ENCODE measurements at regions of chr6 and their contacts with region 1.

Region 1: GRCh38 chr6:16770701-16771569 is 9.7 kb upstream of the ATXN1 start:
- DNase-seq: peak; percentile 79
- H3K4me3 Mint-ChIP-seq: no peak overlapping the region
- H3K27ac Mint-ChIP-seq: no peak overlapping the region
- H3K4me1 Mint-ChIP-seq: peaks cover 57% of the 10 kb centered on the region
- H3K27me3 Mint-ChIP-seq: no peaks in the 10 kb centered on the region

Region 2: DNA sequence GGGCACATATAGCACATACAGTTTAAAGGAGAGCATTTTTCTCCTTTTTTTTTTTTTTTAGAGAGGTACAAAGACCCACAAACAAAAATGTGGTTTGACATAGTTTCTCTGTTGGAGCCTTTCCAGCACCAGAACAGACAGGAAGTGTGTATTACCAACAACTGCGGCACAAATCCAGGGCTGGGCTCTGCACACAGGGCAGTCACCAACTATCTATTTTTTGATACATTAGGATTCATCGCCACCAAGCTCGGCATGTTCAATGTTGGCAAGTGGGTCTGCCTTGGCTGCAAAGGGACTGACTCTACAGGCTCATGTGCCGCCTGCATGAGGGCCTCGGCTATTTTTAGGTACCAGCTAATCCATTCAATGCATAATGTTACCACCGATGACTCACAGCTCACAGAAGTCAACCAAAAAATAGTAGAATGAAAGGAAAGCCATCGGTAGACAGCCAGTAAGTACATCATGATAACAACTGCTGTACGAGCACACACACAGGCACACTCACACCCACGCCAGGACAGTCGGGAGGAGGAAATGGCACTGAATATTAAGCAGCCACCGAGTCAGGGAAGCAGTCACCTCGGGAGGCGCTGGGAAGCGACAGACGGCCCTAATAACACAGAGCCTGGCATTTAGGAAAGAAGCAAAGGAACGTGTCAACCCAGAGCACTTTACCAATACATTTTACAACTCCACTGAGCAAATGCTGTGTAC is 451.0 kb before region 1 on chr6:
- CTCF ChIA-PET with region 1: interaction called, 14 read pairs
- POLR2A ChIA-PET with region 1: interaction called, 7 read pairs
- DNase-seq: peak; percentile 74
- H3K4me3 Mint-ChIP-seq: peak overlapping the region; percentile 71
- H3K27ac Mint-ChIP-seq: peak overlapping the region; percentile 98
- H3K4me1 Mint-ChIP-seq: peaks cover 79% of the 10 kb centered on the region
- H3K27me3 Mint-ChIP-seq: no peaks in the 10 kb centered on the region

Region 3: GRCh38 chr6:16399695-16400094 is 371.2 kb before region 1 on chr6:
- CTCF ChIA-PET with region 1: no interaction called
- POLR2A ChIA-PET with region 1: no interaction called
- DNase-seq: no peak
- H3K4me3 Mint-ChIP-seq: no peak overlapping the region
- H3K27ac Mint-ChIP-seq: no peak overlapping the region
- H3K4me1 Mint-ChIP-seq: peaks cover 31% of the 10 kb centered on the region
- H3K27me3 Mint-ChIP-seq: no peaks in the 10 kb centered on the region

Region 4: DNA sequence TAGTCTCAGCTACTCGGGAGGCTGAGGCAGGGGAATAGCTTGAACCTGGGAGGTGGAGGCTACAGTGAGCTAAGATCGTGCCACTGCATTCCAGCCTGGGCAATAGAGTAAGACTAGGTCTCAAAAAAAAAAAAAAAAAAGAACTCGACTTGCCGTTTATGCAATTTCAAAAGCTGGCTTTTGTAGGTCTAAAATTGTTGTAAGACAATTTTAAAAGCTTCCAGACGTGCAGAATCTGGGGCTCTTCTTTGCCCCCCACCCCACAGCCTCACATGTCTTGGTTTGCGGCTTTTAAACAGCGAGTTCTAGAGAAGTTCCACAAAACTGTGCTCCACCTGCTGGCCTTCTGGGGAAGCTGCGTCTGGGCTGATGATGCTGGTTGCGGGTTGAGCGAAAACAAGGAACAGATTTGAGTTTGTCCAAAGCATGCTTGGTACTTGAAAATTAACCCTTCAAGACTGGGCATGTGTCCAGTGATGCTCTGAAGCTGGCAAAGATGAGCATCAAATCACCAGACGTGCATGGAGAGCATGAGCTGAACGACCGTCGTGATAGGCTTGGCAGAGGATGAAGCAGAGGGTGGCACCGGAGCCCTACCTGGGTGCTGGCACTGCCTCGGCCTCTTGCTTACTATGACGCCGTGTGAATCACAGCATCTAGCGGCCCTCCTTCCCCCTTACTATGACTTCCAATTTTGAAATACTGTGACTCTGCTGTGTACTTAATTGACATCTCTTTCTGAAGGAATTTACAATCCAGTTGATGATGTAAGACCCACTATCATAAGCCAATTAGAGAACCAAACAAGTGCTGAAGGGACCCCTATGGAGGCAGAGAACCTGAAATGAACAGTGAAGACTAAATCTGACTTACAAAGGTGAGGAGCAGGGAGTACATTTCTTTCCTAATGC is 361.1 kb before region 1 on chr6:
- CTCF ChIA-PET with region 1: interaction called, 10 read pairs
- POLR2A ChIA-PET with region 1: no interaction called
- DNase-seq: peak; percentile 73
- H3K4me3 Mint-ChIP-seq: peak overlapping the region; percentile 63
- H3K27ac Mint-ChIP-seq: peak overlapping the region; percentile 73
- H3K4me1 Mint-ChIP-seq: peaks cover 65% of the 10 kb centered on the region
- H3K27me3 Mint-ChIP-seq: no peaks in the 10 kb centered on the region

Region 5: GRCh38 chr6:16781348-16782169 is 10.6 kb after region 1 on chr6:
- CTCF ChIA-PET with region 1: interaction called, 17 read pairs
- POLR2A ChIA-PET with region 1: no interaction called
- DNase-seq: no peak
- H3K4me3 Mint-ChIP-seq: no peak overlapping the region
- H3K27ac Mint-ChIP-seq: no peak overlapping the region
- H3K4me1 Mint-ChIP-seq: no peaks in the 10 kb centered on the region
- H3K27me3 Mint-ChIP-seq: peaks cover 3% of the 10 kb centered on the region

Region 6: GRCh38 chr6:16901782-16902181 is 130.8 kb after region 1 on chr6:
- CTCF ChIA-PET with region 1: no interaction called
- POLR2A ChIA-PET with region 1: no interaction called
- DNase-seq: no peak
- H3K4me3 Mint-ChIP-seq: no peak overlapping the region
- H3K27ac Mint-ChIP-seq: no peak overlapping the region
- H3K4me1 Mint-ChIP-seq: no peaks in the 10 kb centered on the region
- H3K27me3 Mint-ChIP-seq: peaks cover 27% of the 10 kb centered on the region